AG04450 (cell line): ENCODE measurements at regions of chr19 and their contacts with region 1.

Region 1: GRCh38 chr19:13784731-13785452 is 10.4 kb upstream of the ZSWIM4 start:
- DNase-seq: no peak
- H3K4me3 ChIP-seq: no peak overlapping the region
- H3K27ac ChIP-seq: no peak overlapping the region
- H3K27me3 ChIP-seq: no peaks in the 10 kb centered on the region
- CTCF ChIP-seq: peak; percentile 72

Region 2: DNA sequence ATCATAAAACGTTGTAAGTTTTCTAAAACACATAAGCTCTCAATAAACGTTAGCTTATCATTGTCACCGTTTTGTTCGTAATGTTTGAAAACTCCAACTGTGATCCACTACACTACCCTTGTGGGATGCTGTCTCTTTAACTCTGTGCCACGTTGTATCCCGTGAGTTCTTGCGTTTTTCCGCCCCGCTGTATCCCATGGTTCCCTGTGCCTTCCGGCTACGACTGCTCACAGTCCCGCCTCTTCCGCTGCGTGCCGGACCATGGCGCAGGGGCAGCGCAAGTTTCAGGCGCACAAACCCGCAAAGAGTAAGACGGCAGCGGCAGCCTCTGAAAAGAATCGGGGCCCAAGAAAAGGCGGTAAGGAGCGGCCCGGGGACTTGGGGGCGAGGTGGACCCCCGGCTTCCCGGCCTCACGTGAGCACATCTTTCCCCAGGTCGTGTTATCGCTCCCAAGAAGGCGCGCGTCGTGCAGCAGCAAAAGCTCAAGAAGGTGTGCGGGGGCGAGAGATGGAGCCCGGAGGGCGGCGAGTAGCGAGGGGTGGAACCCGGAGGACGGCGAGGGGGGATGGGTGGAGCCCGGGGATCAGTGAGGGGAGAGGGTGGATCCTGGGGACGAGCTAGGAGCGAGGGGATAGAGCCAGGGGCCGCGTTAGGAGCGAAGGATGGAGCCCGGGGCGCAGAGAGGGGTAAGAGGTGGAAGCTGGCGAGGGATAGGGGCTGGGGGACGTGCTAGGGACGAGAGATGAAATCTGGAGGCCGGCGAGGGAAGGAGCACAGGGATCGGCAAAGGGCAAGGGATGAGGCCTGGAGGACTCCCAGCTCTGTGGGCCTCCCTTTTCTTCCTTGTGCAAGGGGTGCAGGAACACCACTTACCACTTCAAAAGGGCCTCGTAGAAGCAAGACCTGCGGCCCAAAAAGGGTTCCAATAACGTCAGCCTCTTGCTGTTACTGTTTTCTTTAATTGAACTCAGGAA is 10.4 kb before region 1 on chr19 and contains the start of gene C19orf53:
- CTCF ChIA-PET with region 1: interaction called, 7 read pairs
- POLR2A ChIA-PET with region 1: interaction called, 29 read pairs
- DNase-seq: peak; percentile 83
- H3K4me3 ChIP-seq: peak within 1 kb of the TSS; percentile 96
- H3K27ac ChIP-seq: peak within 1 kb of the TSS; percentile 96
- H3K27me3 ChIP-seq: no peaks in the 10 kb centered on the region
- CTCF ChIP-seq: no peak
- polyA plus RNA-seq, gene C19orf53: 145 and 213 TPM in 2 replicates

Region 3: GRCh38 chr19:13794757-13795589 is 10.1 kb after region 1 on chr19 and contains the start of gene ZSWIM4:
- CTCF ChIA-PET with region 1: interaction called, 18 read pairs
- POLR2A ChIA-PET with region 1: interaction called, 13 read pairs
- DNase-seq: peak; percentile 98
- H3K4me3 ChIP-seq: peak within 1 kb of the TSS; percentile 87
- H3K27ac ChIP-seq: peak within 1 kb of the TSS; percentile 99
- H3K27me3 ChIP-seq: no peaks in the 10 kb centered on the region
- CTCF ChIP-seq: no peak
- polyA plus RNA-seq, gene ZSWIM4: 2.3 and 3.4 TPM in 2 replicates

Region 4: DNA sequence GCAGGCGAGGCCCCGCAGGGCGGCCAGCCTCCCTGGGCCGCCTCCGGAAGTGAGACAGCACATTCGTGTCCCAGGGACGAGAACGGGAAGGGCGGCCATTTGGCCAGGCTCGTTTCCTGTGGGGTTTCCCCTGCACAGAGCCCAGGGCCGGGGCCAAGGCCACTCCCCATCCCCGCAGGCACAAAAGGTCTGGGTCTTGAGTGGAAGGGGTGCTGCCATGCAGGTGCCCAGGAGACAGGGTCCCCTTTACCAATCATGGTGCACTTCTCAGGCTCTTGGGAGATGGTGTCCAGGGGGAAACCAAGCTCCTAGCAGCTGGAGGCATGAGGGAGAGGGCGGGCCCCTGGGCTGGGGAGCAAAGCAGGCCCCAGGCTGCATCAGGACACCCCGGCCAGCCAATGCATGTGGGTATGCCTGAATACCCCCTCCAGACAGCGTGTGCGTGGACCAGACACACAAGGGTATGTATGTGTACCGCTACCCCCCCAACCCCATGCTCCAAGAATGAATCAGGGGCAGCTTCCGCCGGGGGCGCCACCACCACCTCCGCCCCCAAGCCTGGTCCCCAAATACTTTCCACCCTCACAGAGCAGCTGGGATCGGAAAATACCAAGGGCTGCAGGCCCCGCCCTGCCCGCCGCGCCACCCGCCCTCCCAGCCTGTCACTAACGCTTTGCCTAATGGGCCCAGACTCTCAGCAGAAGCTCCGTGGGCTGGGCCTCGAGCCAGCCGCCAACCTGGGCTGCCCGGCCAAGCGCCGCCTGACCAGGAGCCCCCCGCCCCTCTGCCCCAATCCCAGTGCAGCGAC is 54.4 kb after region 1 on chr19:
- CTCF ChIA-PET with region 1: interaction called, 3 read pairs
- POLR2A ChIA-PET with region 1: interaction called, 10 read pairs
- DNase-seq: no peak
- H3K4me3 ChIP-seq: peak overlapping the region; percentile 88
- H3K27ac ChIP-seq: peak overlapping the region; percentile 90
- H3K27me3 ChIP-seq: no peaks in the 10 kb centered on the region
- CTCF ChIP-seq: no peak

Region 5: DNA sequence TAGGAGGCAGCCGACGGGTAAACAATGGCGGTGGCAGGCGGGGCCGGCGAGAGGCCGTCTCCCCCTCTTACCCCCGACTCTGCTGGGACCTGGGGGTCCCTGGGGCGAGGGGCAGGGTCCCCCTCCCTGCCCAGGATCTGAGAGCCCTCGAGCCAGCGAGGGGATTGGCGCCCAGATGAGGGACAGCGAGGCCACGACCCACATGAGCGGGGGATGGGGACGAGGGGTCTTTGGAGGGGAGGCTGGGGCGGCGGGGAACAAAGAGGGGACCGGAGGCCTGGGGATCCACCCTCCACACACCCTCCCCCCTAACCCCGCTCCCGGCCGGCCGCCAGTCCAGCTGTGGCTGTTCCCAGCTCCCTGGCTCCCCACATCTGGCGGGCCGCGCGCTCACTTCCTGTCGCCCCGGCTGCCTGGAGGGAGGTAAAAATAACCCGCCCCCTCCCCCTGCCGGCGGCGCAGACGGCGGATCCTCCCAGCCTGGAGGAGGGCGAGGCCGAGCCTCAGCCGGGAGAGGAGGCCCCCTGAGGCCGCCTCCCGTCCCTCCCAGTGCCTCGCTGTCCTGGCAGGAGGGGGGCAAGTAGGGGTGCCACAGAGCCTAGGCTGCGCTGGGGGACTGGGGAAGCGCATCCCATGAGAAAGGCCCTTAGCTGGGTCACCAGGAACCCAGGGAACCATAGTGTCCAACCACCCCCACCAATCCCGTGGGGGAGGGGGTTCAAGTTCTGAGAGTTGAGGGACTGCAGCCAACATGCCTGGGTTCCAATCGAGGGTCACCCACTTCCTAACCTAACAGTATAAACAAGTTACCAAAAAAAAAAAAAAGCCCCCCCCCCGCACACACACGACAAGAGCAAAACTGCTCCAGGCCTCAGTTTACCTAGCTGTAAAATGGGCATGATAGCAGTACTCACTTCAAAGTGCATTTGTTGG is 62.8 kb after region 1 on chr19:
- CTCF ChIA-PET with region 1: interaction called, 4 read pairs
- POLR2A ChIA-PET with region 1: interaction called, 13 read pairs
- DNase-seq: peak; percentile 82
- H3K4me3 ChIP-seq: peak overlapping the region; percentile 58
- H3K27ac ChIP-seq: peak overlapping the region; percentile 100
- H3K27me3 ChIP-seq: no peaks in the 10 kb centered on the region
- CTCF ChIP-seq: no peak

Region 6: GRCh38 chr19:13856497-13856896 is 71.6 kb after region 1 on chr19:
- CTCF ChIA-PET with region 1: interaction called, 60 read pairs
- POLR2A ChIA-PET with region 1: interaction called, 16 read pairs
- DNase-seq: no peak
- H3K4me3 ChIP-seq: no peak overlapping the region
- H3K27ac ChIP-seq: no peak overlapping the region
- H3K27me3 ChIP-seq: no peaks in the 10 kb centered on the region
- CTCF ChIP-seq: no peak

Region 7: DNA sequence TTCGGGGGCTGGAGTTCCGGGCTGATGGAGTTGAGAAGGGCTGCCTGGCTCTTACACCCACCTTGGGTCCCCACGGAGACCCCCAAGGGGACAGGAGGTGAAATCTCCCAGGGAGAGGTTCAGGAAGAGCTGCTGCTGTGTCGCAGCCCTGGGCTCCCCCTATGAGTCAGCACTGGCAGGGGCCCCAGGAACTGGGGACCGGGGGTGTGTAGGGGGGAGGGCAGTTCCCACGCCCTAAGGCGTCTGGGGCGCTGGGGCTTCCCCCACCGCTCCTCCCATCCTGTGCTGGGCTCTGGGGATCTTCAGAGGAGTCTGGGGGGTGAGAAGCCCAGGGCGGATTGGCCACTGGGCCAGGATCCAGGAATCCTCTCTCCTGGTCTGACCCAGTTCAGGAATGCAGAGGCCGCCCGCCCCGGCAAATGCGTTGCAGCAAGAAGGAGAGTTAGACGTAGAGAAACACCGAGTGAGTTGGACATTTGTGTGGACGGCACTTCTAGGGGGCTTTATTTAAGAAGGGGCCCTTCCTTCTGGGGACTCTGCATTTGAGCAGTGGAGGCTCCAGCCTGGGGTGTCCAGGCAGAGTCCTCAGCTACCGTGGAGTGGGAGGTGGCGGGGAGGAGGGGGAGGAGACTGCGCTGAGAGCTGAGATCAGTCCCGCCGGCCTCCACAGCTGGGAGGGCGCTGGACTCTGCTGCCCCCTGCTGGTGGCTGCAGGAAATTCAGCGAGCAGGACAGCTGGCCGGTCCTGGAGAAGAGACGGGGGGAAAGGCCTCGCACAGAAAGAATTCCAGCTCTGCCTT is 77.0 kb after region 1 on chr19:
- CTCF ChIA-PET with region 1: interaction called, 60 read pairs
- POLR2A ChIA-PET with region 1: interaction called, 16 read pairs
- DNase-seq: peak; percentile 74
- H3K4me3 ChIP-seq: peak overlapping the region; percentile 49
- H3K27ac ChIP-seq: peak overlapping the region; percentile 90
- H3K27me3 ChIP-seq: no peaks in the 10 kb centered on the region
- CTCF ChIP-seq: peak; percentile 93